K562 (cell line): ENCODE measurements at regions of chr11 and their contacts with region 1.

Region 1: GRCh38 chr11:73335204-73335923 is 27.3 kb downstream of the ARHGEF17 start:
- DNase-seq: peak; percentile 83 to 87 (median 85)
- ATAC-seq: peak; percentile 85
- H3K4me3 ChIP-seq: no peak overlapping the region
- H3K27ac ChIP-seq: no peak overlapping the region
- H3K4me1 ChIP-seq: peaks cover 13 to 16% of the 10 kb centered on the region in 2 experiments; a peak in 4 of 5 replicates
- H3K27me3 ChIP-seq: peaks cover 0 to 10% of the 10 kb centered on the region in 2 experiments; a peak in 2 of 5 replicates
- CTCF ChIP-seq: peak; percentile 94 to 97 (median 94)
- EP300 ChIP-seq: no peak
- POLR2A ChIP-seq: no peak
- RAD21 ChIP-seq: peak; percentile 69 to 80

Region 2: DNA sequence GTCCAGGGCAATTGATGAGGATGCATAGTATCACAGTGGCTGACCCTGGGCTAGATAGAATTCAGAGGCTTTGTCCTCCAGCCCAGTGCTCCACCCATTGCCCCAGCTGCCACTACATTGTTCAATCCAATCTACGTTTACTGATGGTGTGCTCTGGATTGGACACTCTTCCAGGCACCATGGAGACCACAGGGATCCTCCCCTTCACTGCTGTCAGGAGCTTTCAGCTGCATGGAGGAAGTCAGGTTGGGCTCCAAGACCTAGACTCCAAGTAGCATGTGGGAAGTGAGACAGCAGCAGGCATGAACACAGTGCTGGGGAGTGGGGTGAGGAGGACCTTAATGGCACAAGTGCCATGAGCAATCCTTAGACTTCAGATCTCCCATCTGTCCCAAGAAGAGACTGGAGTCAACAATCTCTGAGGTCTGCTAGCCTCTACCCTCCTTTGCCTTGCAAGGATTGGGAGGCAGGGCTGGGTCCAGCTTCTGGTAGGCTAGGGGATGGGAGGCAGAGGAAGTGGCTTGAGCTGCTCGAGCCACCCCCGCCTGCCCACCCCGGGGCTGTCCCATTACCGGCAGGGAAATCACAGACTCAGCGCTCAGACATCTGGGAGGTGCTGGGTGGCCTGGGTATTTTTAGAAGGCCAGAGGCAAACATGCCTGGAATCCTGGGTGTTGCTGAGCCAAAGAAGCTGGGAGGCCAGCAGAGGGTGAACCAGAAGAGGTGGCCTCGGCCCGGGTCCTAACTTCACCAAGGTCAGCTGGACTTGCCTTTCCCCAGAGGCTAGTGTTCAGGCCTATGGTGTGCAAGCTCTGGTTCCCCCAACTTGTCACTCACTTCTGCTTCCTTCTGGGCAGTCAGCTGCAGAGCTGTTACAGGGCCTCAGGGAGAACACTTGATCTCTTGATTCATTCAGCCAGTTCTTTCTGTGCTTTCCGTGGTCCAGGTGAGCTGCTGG is 178.0 kb before region 1 on chr11:
- CTCF ChIA-PET with region 1: no interaction called
- POLR2A ChIA-PET with region 1: no interaction called
- in situ Hi-C with region 1: no loop called
- intact Hi-C with region 1: no loop called
- DNase-seq: no peak
- ATAC-seq: no peak; the same call in 2 of the 3 replicates
- H3K4me3 ChIP-seq: no peak overlapping the region
- H3K27ac ChIP-seq: no peak overlapping the region
- H3K4me1 ChIP-seq: peaks cover 12 to 19% of the 10 kb centered on the region in 2 experiments
- H3K27me3 ChIP-seq: no peaks in the 10 kb centered on the region
- CTCF ChIP-seq: no peak
- EP300 ChIP-seq: no peak
- POLR2A ChIP-seq: no peak
- RAD21 ChIP-seq: no peak

Region 3: GRCh38 chr11:73242251-73243079 is 92.9 kb before region 1 on chr11:
- CTCF ChIA-PET with region 1: no interaction called
- POLR2A ChIA-PET with region 1: interaction called, 3 read pairs
- in situ Hi-C with region 1: no loop called
- intact Hi-C with region 1: loop called (anchors 2 kb)
- DNase-seq: peak; percentile 78 to 83 (median 79)
- ATAC-seq: peak; percentile 96
- H3K4me3 ChIP-seq: peak overlapping the region; percentile 21; the same call in 1 of the 2 replicates
- H3K27ac ChIP-seq: no peak overlapping the region; the same call in 2 of the 3 replicates
- H3K4me1 ChIP-seq: peaks cover 0 to 3% of the 10 kb centered on the region in 2 experiments; a peak in 1 of 5 replicates
- H3K27me3 ChIP-seq: peaks cover 0 to 28% of the 10 kb centered on the region in 2 experiments; a peak in 4 of 5 replicates
- CTCF ChIP-seq: peak; percentile 83 to 89 (median 88)
- EP300 ChIP-seq: no peak
- POLR2A ChIP-seq: no peak
- RAD21 ChIP-seq: peak; percentile 68 to 81

Region 4: GRCh38 chr11:73295231-73295995 is 40.0 kb before region 1 on chr11:
- CTCF ChIA-PET with region 1: interaction called, 30 read pairs
- POLR2A ChIA-PET with region 1: no interaction called
- in situ Hi-C with region 1: loop called (anchors 5 kb)
- intact Hi-C with region 1: loop called (anchors 2 kb)
- DNase-seq: peak; percentile 71 to 80 (median 80)
- ATAC-seq: peak; percentile 86
- H3K4me3 ChIP-seq: no peak overlapping the region
- H3K27ac ChIP-seq: no peak overlapping the region
- H3K4me1 ChIP-seq: peaks cover 0 to 10% of the 10 kb centered on the region in 2 experiments; a peak in 2 of 5 replicates
- H3K27me3 ChIP-seq: peaks cover 24 to 33% of the 10 kb centered on the region in 2 experiments
- CTCF ChIP-seq: peak; percentile 86 to 97 (median 94)
- EP300 ChIP-seq: no peak
- POLR2A ChIP-seq: no peak
- RAD21 ChIP-seq: peak; percentile 51 to 75

Region 5: GRCh38 chr11:73307323-73308002 is 27.9 kb before region 1 on chr11:
- CTCF ChIA-PET with region 1: interaction called, 76 read pairs
- POLR2A ChIA-PET with region 1: no interaction called
- in situ Hi-C with region 1: no loop called
- intact Hi-C with region 1: loop called (anchors 1 kb)
- DNase-seq: peak; percentile 92 to 94 (median 94)
- ATAC-seq: peak; percentile 93
- H3K4me3 ChIP-seq: peak overlapping the region; percentile 49
- H3K27ac ChIP-seq: peak overlapping the region; percentile 32; the same call in 1 of the 3 replicates
- H3K4me1 ChIP-seq: peaks cover 0 to 22% of the 10 kb centered on the region in 2 experiments; a peak in 4 of 5 replicates
- H3K27me3 ChIP-seq: peaks cover 6 to 43% of the 10 kb centered on the region in 2 experiments; a peak in 3 of 5 replicates
- CTCF ChIP-seq: peak; percentile 89 to 92 (median 91)
- EP300 ChIP-seq: peak; percentile 29; the same call in 1 of the 2 replicates
- POLR2A ChIP-seq: no peak
- RAD21 ChIP-seq: peak; percentile 83 to 91